Sigmoid colon (tissue), 7 donors: ENCODE measurements at regions of chr6 and their contacts with region 1.

Region 1: GRCh38 chr6:33788694-33789549 is at the start of gene LEMD2:
- DNase-seq: peak; percentile 97
- H3K4me3 ChIP-seq: peak within 1 kb of the TSS; percentile 60 to 92 (median 85)
- H3K27ac ChIP-seq: peak within 1 kb of the TSS; percentile 94 to 99 (median 98)
- H3K4me1 ChIP-seq: peaks cover 0 to 44% (median 38%) of the 10 kb centered on the region in 4 donors
- H3K27me3 ChIP-seq: peaks cover 0 to 10% (median 0%) of the 10 kb centered on the region in 3 donors
- CTCF ChIP-seq: no peak
- EP300 ChIP-seq: no peak
- POLR2A ChIP-seq: peak; percentile 55 to 68
- total RNA-seq, gene LEMD2: 31.8 to 42.7 (median 38.8) TPM

Region 2: GRCh38 chr6:33570806-33571636 is 217.9 kb before region 1 on chr6:
- intact Hi-C with region 1: loop called (anchors 5 kb)
- DNase-seq: peak; percentile 91
- H3K4me3 ChIP-seq: peak overlapping the region; percentile 61 to 74 (median 64)
- H3K27ac ChIP-seq: peak overlapping the region; percentile 86 to 88 (median 87)
- H3K4me1 ChIP-seq: peaks cover 0 to 19% (median 10%) of the 10 kb centered on the region in 4 donors
- H3K27me3 ChIP-seq: no peaks in the 10 kb centered on the region
- CTCF ChIP-seq: no peak
- EP300 ChIP-seq: no peak
- POLR2A ChIP-seq: peak; percentile 22 to 35

Region 3: GRCh38 chr6:33744001-33744848 is 44.7 kb before region 1 on chr6:
- intact Hi-C with region 1: loop called (anchors 1 kb)
- DNase-seq: peak; percentile 86
- H3K4me3 ChIP-seq: peak overlapping the region in 3 of 4 donors; percentile 45 to 49 (median 46)
- H3K27ac ChIP-seq: peak overlapping the region in 3 of 4 donors; percentile 90 to 93 (median 90)
- H3K4me1 ChIP-seq: peaks cover 0 to 63% (median 43%) of the 10 kb centered on the region in 4 donors
- H3K27me3 ChIP-seq: no peaks in the 10 kb centered on the region
- CTCF ChIP-seq: peak; percentile 92 to 96 (median 95)
- EP300 ChIP-seq: no peak
- POLR2A ChIP-seq: no peak

Region 4: GRCh38 chr6:33824461-33825154 is 35.7 kb after region 1 on chr6:
- intact Hi-C with region 1: loop called (anchors 5 kb)
- DNase-seq: no peak
- H3K4me3 ChIP-seq: no peak overlapping the region
- H3K27ac ChIP-seq: no peak overlapping the region
- H3K4me1 ChIP-seq: peaks cover 0 to 20% (median 12%) of the 10 kb centered on the region in 4 donors
- H3K27me3 ChIP-seq: peaks cover 0 to 7% (median 0%) of the 10 kb centered on the region in 3 donors
- CTCF ChIP-seq: no peak
- EP300 ChIP-seq: no peak
- POLR2A ChIP-seq: no peak

Region 5: DNA sequence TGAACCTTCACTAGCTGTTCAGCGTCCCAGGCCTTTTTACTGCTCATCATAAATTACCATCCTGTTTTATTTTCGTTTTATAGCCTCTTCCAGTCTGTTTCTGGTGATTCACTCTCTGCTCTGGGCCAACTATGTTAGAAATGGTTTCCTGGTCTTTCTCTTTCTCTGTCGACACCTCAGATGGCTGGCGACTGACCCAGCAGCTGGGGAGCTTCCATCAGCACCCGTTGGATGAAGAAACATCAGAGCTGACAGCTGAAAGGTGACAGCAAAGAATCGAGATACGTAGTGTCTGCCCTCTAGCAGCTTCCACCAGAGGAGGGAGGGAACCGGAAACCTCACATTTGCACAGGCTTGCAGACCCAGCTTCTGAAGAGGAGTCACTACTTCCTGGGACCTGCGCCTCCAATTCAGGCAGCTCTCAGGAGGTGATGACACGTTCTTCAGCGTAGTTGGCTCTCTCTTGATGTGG is 97.8 kb after region 1 on chr6:
- intact Hi-C with region 1: loop called (anchors 5 kb)
- DNase-seq: peak; percentile 83
- H3K4me3 ChIP-seq: no peak overlapping the region
- H3K27ac ChIP-seq: peak overlapping the region in 3 of 4 donors; percentile 62 to 69 (median 67)
- H3K4me1 ChIP-seq: peaks cover 0 to 50% (median 47%) of the 10 kb centered on the region in 4 donors
- H3K27me3 ChIP-seq: no peaks in the 10 kb centered on the region
- CTCF ChIP-seq: no peak
- EP300 ChIP-seq: peak; percentile 38 to 92 (median 88)
- POLR2A ChIP-seq: no peak

Region 6: DNA sequence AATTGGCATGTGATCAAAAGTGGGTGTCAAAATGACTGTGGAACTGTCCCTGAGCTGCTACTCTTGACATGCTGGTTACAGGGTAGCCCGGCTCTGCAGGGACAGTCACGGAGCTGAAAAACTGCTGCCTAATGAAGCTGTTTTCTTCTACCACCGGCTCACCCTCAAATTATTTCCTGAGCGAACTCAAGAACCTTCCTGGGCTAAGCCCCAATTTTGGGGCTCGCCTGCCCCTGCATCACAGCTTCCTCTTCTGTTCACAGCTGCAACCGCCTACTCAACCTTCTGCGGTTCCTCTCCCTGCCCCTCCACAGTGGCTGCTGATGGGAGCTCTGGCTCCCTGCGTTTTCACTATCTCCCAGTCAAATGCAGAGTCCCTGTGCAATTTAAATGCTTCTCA is 125.7 kb after region 1 on chr6:
- intact Hi-C with region 1: loop called (anchors 5 kb)
- DNase-seq: no peak
- H3K4me3 ChIP-seq: no peak overlapping the region
- H3K27ac ChIP-seq: no peak overlapping the region
- H3K4me1 ChIP-seq: peaks cover 0 to 20% (median 19%) of the 10 kb centered on the region in 4 donors
- H3K27me3 ChIP-seq: no peaks in the 10 kb centered on the region
- CTCF ChIP-seq: no peak
- EP300 ChIP-seq: no peak
- POLR2A ChIP-seq: no peak

Region 7: DNA sequence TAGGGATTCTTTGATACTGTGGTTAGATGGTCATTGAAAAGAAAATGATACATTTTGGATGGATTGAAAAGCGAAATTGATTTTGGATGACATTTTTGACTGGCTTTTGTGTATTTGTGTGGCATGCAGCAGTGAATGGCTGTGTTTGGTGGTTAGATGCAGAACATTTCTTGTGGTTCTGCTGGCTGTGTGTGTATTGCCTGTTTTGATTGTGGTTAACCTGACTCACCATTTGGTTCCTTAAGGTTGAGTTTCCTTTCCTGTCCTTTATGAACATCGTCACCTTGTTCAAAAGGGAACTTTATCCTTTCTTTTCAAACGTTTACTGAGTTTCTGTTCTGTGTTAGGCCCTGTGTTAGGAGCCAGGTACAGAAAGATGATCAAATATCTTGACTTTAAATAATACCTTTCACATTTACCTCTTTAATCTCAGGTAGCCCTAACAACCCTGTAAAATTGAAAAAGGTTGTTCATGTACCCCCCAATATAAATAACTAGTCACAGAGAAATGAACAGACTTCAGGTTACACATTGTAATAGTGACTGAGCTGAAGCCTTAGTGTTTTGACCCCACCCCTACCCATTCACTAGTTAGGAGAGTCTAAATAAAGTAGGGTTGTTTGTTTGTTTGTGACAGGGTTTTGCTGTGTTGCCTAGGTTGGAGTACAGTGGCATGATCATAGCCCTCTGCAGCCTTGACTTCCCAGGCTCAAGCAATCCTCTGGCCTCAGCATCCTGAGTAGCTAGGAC is 1124.0 kb after region 1 on chr6:
- intact Hi-C with region 1: no loop called
- DNase-seq: no peak
- H3K4me3 ChIP-seq: no peak overlapping the region
- H3K27ac ChIP-seq: no peak overlapping the region
- H3K4me1 ChIP-seq: peaks cover 0 to 16% (median 5%) of the 10 kb centered on the region in 4 donors
- H3K27me3 ChIP-seq: no peaks in the 10 kb centered on the region
- CTCF ChIP-seq: no peak
- EP300 ChIP-seq: no peak
- POLR2A ChIP-seq: no peak